HAP-1 (cell line): ENCODE measurements at regions of chr11 and their contacts with region 1.

Region 1: DNA sequence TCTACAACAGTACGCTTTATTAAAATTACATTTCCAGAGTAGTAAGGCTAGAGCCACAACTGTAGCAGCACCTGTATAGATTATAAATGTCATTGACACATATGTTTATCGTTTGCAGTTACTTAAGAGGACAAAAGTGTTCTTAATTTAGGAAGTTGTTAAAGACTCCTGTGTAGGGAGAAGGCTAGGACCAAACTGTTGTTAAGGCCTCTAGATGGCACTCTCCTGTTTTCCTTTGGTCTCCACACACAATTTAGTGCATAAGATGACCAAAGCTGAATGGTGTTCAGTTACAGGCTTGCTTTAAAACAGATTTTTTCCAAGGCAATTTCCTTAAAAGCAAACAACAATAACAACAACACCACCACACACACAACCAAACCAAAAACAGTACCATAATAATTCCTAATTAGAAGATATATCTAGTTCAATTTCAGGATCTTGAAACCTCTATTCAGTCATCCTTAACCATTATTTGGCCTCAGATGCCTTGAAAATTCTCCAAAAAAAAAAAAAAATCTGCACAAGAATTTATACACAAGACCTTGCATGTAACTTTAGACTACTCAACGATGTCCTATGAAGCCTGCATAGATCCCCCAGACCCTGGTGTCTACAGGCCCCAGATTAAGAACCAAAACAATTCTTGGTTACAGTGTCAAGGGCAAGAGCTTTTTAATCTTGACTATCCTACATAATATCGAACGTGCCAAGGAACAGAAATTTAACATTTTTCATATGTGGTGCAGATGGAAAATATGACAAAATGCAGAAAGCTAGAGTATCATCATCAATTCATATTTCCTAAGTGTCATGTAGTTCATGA is 42.6 kb upstream of the APOA1 start:
- DNase-seq: peak; percentile 20 to 70
- H3K4me3 ChIP-seq: no peak overlapping the region
- H3K4me1 ChIP-seq: no peaks in the 10 kb centered on the region
- H3K27me3 ChIP-seq: no peaks in the 10 kb centered on the region

Region 2: GRCh38 chr11:117189191-117189930 is 309.3 kb after region 1 on chr11:
- in situ Hi-C with region 1: no loop called
- DNase-seq: no peak
- H3K4me3 ChIP-seq: no peak overlapping the region
- H3K4me1 ChIP-seq: no peaks in the 10 kb centered on the region
- H3K27me3 ChIP-seq: no peaks in the 10 kb centered on the region

Region 3: GRCh38 chr11:117226388-117227385 is 346.7 kb after region 1 on chr11:
- in situ Hi-C with region 1: loop called (anchors 10 kb)
- DNase-seq: peak; percentile 60 to 82
- H3K4me3 ChIP-seq: no peak overlapping the region
- H3K4me1 ChIP-seq: peaks cover 8% of the 10 kb centered on the region; the same call in 1 of the 2 replicates
- H3K27me3 ChIP-seq: no peaks in the 10 kb centered on the region

Region 4: GRCh38 chr11:117861151-117862018 is 981.4 kb after region 1 on chr11:
- in situ Hi-C with region 1: no loop called
- DNase-seq: peak; percentile 90 to 92
- H3K4me3 ChIP-seq: no peak overlapping the region
- H3K4me1 ChIP-seq: peaks cover 51% of the 10 kb centered on the region
- H3K27me3 ChIP-seq: no peaks in the 10 kb centered on the region